ENCODE measurements at regions of chr20 and their contacts with region 1.

Region 1: GRCh38 chr20:53570521-53571357 is 22.9 kb downstream of the ZNF217 start:
- DNase-seq: no peak
- H3K4me3 ChIP-seq: no peak overlapping the region
- H3K27ac ChIP-seq: no peak overlapping the region
- H3K4me1 ChIP-seq: no peaks in the 10 kb centered on the region
- H3K27me3 ChIP-seq: no peaks in the 10 kb centered on the region
- CTCF ChIP-seq: no peak

Region 2: GRCh38 chr20:53527196-53527595 is 43.5 kb before region 1 on chr20:
- CTCF ChIA-PET with region 1: no interaction called
- dilution Hi-C with region 1: no loop called
- in situ Hi-C with region 1: no loop called
- intact Hi-C with region 1: no loop called
- DNase-seq: no peak
- H3K4me3 ChIP-seq: no peak overlapping the region
- H3K27ac ChIP-seq: no peak overlapping the region
- H3K4me1 ChIP-seq: no peaks in the 10 kb centered on the region
- H3K27me3 ChIP-seq: no peaks in the 10 kb centered on the region
- CTCF ChIP-seq: no peak

Region 3: GRCh38 chr20:54062812-54063280 is 492.1 kb after region 1 on chr20:
- CTCF ChIA-PET with region 1: no interaction called
- dilution Hi-C with region 1: no loop called
- in situ Hi-C with region 1: loop called (anchors 10 to 25 kb)
- intact Hi-C with region 1: no loop called
- DNase-seq: peak; percentile 39
- H3K4me3 ChIP-seq: no peak overlapping the region
- H3K27ac ChIP-seq: no peak overlapping the region
- H3K4me1 ChIP-seq: peaks cover 10% of the 10 kb centered on the region
- H3K27me3 ChIP-seq: no peaks in the 10 kb centered on the region
- CTCF ChIP-seq: peak; percentile 67 to 77

Measured in mammary epithelial cell (primary cell).